ENCODE measurements at regions of chr12 and their contacts with region 1.

Region 1: DNA sequence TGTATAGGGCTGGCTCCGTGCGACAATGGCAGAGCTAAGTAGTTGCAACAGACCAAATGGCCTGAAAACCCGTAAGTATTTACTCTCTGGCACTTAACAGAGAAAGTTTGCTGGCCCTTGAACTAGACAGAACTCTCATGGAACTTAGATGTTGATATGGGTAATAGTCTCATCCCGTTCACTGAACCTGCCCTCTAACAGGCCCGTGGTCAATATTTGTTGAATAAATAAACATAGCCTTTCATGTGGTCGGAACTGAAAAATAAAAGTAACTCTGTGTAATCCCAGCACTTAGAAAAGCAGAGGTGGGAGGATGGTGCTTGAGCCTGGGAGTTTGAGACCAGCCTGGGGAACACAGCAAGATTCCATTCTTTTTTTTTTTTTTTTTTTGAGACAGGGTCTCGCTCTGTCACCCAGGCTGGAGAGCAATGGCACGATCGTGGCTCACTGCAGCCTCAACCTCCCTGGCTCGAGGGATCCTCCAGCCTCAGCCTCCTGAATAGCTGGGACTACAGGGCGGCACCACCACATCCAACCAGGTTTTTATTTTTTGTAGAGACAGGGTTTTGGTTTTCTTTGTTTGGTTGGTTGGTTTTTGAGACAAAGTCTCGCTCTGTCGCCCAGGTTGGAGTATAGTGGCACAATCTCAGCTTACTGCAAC is 29.7 kb downstream of the KDM2B start:
- DNase-seq: no peak
- H3K4me3 ChIP-seq: no peak overlapping the region
- H3K4me3 Mint-ChIP-seq: no peak overlapping the region
- H3K27ac ChIP-seq: no peak overlapping the region
- H3K27ac Mint-ChIP-seq: peak overlapping the region in 2 of 7 donors; percentile 42 to 64
- H3K4me1 ChIP-seq: no peaks in the 10 kb centered on the region
- H3K4me1 Mint-ChIP-seq: peaks cover 3 to 7% (median 5%) of the 10 kb centered on the region in 4 donors
- H3K27me3 ChIP-seq: no peaks in the 10 kb centered on the region
- H3K27me3 Mint-ChIP-seq: no peaks in the 10 kb centered on the region

Region 2: DNA sequence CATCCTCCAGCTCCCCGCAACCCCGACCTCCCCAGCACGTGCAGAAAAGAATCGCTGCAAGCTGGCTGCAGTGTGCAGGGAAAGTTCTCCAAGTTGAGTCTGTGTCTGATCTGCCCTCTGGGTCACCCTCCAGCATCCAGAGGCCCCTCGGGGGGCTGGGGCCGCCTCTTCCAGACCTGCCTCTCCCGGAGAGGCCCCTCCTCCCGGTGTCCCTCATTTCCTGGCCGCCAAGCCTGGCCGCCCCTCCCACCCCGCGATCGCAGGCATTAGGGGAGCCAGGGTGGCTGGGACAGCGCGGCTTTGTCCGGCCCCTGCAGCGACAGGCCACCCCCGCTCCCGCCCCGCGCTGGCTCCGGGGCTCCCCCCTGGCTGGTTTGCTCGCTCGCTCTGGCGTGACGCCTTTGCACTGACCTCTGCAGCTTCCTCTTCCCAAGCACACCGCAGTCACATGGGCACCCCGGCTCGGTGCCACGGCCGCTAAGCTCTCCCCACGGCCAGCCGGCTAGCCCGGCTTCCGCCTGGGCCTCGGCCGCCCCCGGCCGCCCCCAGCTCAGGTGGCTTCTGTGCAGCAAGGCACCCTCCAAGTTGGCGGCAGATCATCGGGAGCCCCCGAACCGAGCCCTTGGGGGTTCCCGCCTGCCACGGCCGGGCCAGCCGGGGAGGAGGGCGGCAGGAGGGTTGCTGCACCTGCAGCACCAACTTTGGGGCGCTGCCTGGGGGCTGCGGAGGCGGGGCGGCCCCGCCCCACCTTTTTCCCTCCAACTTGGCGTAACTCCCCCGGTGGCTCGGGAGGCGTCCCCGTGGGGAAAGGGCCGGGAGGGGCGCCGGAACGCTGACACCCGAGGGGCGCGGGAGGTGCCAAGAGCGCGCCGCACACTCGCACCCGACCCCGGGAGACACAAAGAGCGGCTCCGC is 13.9 kb before region 1 on chr12:
- CTCF ChIA-PET with region 1: interaction called, 14 read pairs
- POLR2A ChIA-PET with region 1: interaction called, 5 read pairs
- intact Hi-C with region 1: no loop called
- DNase-seq: peak; percentile 46 to 75 (median 48)
- H3K4me3 ChIP-seq: peak overlapping the region; percentile 29 to 55
- H3K4me3 Mint-ChIP-seq: peak overlapping the region; percentile 62 to 86 (median 82)
- H3K27ac ChIP-seq: peak overlapping the region; percentile 80
- H3K27ac Mint-ChIP-seq: peak overlapping the region; percentile 95 to 99 (median 95)
- H3K4me1 ChIP-seq: peaks cover 57% of the 10 kb centered on the region
- H3K4me1 Mint-ChIP-seq: peaks cover 29 to 69% (median 48%) of the 10 kb centered on the region in 4 donors
- H3K27me3 ChIP-seq: no peaks in the 10 kb centered on the region
- H3K27me3 Mint-ChIP-seq: no peaks in the 10 kb centered on the region

Region 3: DNA sequence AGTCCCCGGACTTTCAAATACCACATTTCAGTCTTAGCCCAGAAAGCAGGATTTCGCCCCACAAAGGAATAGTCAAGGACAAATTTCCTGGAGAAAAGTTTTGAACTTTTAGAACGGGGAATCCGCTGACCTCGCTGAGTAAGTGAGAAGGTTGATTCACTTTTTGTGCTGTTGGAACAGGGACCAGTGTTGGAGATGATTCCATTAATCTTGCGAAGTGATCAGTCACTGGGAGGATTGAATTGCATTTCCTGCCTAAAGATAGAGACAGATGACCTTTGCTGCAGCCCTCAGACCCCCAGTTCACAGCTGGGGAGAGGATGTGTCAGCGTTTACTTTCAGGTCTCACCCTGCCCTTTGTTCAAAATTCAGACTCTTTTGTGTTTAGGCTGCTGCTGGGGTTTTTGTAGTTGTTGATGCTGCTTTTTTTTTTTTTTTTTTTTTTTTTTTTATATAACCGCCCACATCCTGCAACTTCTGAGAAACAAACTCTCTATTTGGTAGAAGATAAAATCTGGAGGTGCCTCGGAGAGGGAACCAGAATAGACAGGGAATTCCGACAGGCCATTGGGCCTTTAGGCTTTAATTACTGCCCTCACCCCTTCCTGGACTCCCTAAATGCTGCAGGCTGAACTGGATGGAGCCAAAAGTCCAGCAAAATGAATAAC is 39.5 kb after region 1 on chr12:
- CTCF ChIA-PET with region 1: interaction called, 10 read pairs
- POLR2A ChIA-PET with region 1: interaction called, 16 read pairs
- intact Hi-C with region 1: loop called (anchors 5 kb)
- DNase-seq: peak; percentile 84 to 86 (median 85)
- H3K4me3 ChIP-seq: peak overlapping the region; percentile 42 to 62
- H3K4me3 Mint-ChIP-seq: peak overlapping the region; percentile 87 to 94 (median 92)
- H3K27ac ChIP-seq: peak overlapping the region; percentile 97
- H3K27ac Mint-ChIP-seq: peak overlapping the region; percentile 94 to 100 (median 99)
- H3K4me1 ChIP-seq: peaks cover 52% of the 10 kb centered on the region
- H3K4me1 Mint-ChIP-seq: peaks cover 23 to 49% (median 35%) of the 10 kb centered on the region in 4 donors
- H3K27me3 ChIP-seq: no peaks in the 10 kb centered on the region
- H3K27me3 Mint-ChIP-seq: no peaks in the 10 kb centered on the region

Region 4: DNA sequence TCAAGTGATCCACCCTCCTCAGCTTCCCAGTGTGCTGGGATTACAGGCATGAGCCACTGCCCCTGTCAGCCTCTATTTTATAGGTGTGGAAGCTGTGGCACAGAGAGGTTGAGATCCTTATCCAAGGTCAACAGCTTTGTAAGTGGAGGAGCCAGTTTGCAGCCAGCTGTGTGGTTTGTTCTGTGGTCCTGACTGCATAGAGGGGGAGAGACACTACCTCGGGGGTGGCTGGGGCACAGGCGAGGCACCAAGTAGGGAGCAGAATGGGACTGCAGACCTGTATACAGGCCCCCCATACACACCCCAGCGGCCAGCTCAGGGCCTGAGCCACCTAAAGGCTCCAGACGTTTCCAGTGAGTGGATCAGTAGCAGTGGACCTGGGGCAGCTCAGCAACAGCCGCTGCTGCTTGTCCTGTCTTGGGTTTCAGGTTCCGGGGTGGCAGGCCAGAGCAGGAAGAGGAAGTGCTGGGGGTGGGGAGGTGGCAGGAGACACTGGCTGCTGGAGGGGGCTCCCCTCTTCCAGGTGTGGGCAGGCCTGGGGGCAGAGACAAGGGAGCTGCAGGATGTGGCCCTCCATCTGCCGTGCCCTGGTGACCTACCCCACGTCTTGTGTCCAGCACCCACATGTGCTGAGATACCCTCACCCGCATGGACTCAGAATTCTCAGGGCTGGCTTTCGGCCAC is 86.3 kb after region 1 on chr12:
- CTCF ChIA-PET with region 1: interaction called, 13 read pairs
- POLR2A ChIA-PET with region 1: interaction called, 3 read pairs
- intact Hi-C with region 1: no loop called
- DNase-seq: peak; percentile 36 to 64 (median 49)
- H3K4me3 ChIP-seq: peak overlapping the region in 1 of 2 donors; percentile 23
- H3K4me3 Mint-ChIP-seq: peak overlapping the region; percentile 13 to 84 (median 68)
- H3K27ac ChIP-seq: peak overlapping the region; percentile 59
- H3K27ac Mint-ChIP-seq: peak overlapping the region; percentile 89 to 93 (median 90)
- H3K4me1 ChIP-seq: peaks cover 58% of the 10 kb centered on the region
- H3K4me1 Mint-ChIP-seq: peaks cover 31 to 59% (median 44%) of the 10 kb centered on the region in 4 donors
- H3K27me3 ChIP-seq: no peaks in the 10 kb centered on the region
- H3K27me3 Mint-ChIP-seq: no peaks in the 10 kb centered on the region

Region 5: GRCh38 chr12:121678716-121679580 is 127.8 kb after region 1 on chr12:
- CTCF ChIA-PET with region 1: interaction called, 78 read pairs
- POLR2A ChIA-PET with region 1: interaction called, 3 read pairs
- intact Hi-C with region 1: loop called (anchors 1 kb)
- DNase-seq: no peak
- H3K4me3 ChIP-seq: no peak overlapping the region
- H3K4me3 Mint-ChIP-seq: no peak overlapping the region
- H3K27ac ChIP-seq: no peak overlapping the region
- H3K27ac Mint-ChIP-seq: peak overlapping the region in 4 of 7 donors; percentile 18 to 70 (median 50)
- H3K4me1 ChIP-seq: peaks cover 3% of the 10 kb centered on the region
- H3K4me1 Mint-ChIP-seq: peaks cover 4 to 10% (median 5%) of the 10 kb centered on the region in 4 donors
- H3K27me3 ChIP-seq: no peaks in the 10 kb centered on the region
- H3K27me3 Mint-ChIP-seq: no peaks in the 10 kb centered on the region